Endothelial cell of umbilical vein (primary cell): ENCODE measurements at regions of chr15 and their contacts with region 1.

Region 1: DNA sequence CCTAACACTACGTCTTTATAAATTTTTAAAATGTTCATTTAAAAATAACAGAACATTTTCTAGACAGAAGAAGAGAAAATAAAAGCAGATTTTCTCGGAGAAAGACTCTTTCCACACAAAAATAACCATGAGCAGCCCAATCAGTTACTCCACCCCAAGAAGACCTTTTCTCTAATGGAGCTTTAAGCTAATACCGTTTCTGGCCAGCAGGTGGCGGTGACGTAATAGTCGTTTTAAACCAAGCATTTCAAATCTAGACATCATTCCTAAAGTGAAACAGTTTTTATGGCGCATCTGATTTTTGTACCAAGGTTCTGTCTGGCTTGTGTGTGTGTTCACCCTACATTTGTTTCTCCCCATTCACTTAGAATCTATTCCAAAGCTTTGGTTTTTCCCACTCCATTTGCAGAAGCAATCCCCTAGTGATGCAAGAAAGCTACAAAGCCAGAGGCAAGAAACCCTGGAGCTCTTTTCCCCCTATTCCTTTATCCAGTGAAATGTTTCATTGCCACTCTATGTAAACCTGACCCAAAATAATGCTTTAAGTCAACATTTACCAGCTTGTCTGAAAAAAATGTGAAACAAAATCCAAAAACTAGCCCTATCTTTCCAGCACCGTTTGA is 336.7 kb upstream of the IGF1R start:
- DNase-seq: peak; percentile 71
- H3K4me3 ChIP-seq: no peak overlapping the region
- H3K27ac ChIP-seq: no peak overlapping the region
- H3K4me1 ChIP-seq: no peaks in the 10 kb centered on the region
- H3K27me3 ChIP-seq: no peaks in the 10 kb centered on the region
- CTCF ChIP-seq: peak; percentile 65 to 67
- POLR2A ChIP-seq: no peak

Region 2: GRCh38 chr15:98321896-98322295 is 10.2 kb after region 1 on chr15:
- CTCF ChIA-PET with region 1: interaction called, 18 read pairs
- POLR2A ChIA-PET with region 1: no interaction called
- dilution Hi-C with region 1: no loop called
- intact Hi-C with region 1: no loop called
- DNase-seq: no peak
- H3K4me3 ChIP-seq: no peak overlapping the region
- H3K27ac ChIP-seq: no peak overlapping the region
- H3K4me1 ChIP-seq: no peaks in the 10 kb centered on the region
- H3K27me3 ChIP-seq: no peaks in the 10 kb centered on the region
- CTCF ChIP-seq: no peak
- POLR2A ChIP-seq: no peak

Region 3: GRCh38 chr15:98421419-98422129 is 109.9 kb after region 1 on chr15:
- CTCF ChIA-PET with region 1: interaction called, 77 read pairs
- POLR2A ChIA-PET with region 1: no interaction called
- dilution Hi-C with region 1: no loop called
- intact Hi-C with region 1: loop called (anchors 1 kb)
- DNase-seq: peak; percentile 36
- H3K4me3 ChIP-seq: no peak overlapping the region
- H3K27ac ChIP-seq: no peak overlapping the region
- H3K4me1 ChIP-seq: no peaks in the 10 kb centered on the region
- H3K27me3 ChIP-seq: peaks cover 6 to 18% of the 10 kb centered on the region in 2 experiments
- CTCF ChIP-seq: peak; percentile 97 to 99
- POLR2A ChIP-seq: no peak

Region 4: DNA sequence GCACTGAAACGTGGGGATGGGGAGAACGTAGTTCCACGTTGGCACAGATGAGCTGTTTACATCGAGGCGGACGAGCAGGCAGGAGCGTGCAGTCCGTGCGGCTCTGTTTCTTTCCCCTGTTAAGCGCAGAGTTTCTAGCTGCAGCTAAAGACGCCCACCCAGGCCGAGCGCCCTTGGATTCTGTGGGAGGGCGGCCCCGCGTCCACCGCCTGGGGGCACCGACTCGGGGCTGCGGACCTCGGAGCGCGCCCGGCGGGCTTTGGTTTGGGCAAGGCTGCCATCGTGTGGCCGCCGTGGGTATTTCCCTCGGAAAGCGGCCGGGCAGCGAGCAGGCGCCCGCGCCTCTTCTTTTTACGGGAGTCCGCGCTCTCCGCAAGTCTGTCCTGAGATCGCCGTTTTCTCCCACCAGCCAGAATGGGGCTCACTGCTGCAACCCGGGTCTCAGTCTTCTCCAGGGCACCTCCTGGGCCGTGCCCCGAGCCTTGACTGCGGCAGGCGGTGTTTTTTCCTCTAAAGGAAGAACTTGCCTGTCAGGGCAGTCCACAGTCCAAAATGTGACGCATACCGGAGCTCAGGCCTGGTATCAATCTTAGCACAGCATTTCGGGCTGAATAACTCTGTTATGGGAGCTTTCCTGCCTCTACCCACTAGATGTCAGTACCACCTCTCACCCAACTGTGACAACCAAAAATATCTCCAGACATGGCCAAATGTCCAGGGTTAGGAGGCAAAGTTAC is 116.7 kb after region 1 on chr15:
- CTCF ChIA-PET with region 1: interaction called, 77 read pairs
- POLR2A ChIA-PET with region 1: no interaction called
- dilution Hi-C with region 1: no loop called
- intact Hi-C with region 1: loop called (anchors 1 kb)
- DNase-seq: peak; percentile 60
- H3K4me3 ChIP-seq: no peak overlapping the region
- H3K27ac ChIP-seq: no peak overlapping the region
- H3K4me1 ChIP-seq: no peaks in the 10 kb centered on the region
- H3K27me3 ChIP-seq: no peaks in the 10 kb centered on the region
- CTCF ChIP-seq: peak; percentile 67 to 92
- POLR2A ChIP-seq: no peak

Region 5: DNA sequence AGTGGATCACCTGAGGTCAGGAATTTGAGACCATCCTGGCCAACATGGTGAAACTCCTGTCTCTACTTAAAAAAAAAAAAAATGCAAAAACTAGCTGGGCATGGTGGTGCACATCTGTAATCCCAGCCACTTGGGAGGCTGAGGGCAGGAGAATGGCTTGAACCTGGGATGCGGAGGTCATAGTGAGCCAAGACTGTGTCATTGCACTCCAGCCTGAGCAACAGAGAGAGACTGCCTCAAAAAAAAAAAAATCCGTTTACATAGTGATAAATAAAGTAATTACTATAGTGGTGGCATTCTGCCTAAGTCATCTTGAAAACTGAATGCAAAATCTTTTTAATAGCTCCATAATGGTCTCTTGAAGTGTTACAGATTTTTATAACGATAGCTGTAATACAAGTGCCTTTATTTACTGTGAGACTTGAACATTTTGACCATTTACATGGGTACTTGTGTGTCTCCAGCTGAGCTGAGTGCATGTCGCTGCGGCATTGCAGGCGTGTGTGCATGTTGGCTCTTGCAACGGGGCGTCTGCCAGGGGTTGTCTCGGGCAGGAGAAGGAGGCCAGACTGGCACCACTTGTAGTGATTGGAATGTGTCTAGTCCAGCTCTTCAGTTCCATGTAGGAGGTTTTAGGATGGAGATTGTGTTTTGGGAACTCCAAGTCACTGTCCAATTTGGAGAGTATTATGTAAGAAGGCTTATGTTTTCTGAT is 448.6 kb after region 1 on chr15:
- CTCF ChIA-PET with region 1: no interaction called
- POLR2A ChIA-PET with region 1: no interaction called
- dilution Hi-C with region 1: no loop called
- intact Hi-C with region 1: no loop called
- DNase-seq: no peak
- H3K4me3 ChIP-seq: no peak overlapping the region
- H3K27ac ChIP-seq: no peak overlapping the region
- H3K4me1 ChIP-seq: no peaks in the 10 kb centered on the region
- H3K27me3 ChIP-seq: no peaks in the 10 kb centered on the region
- CTCF ChIP-seq: no peak
- POLR2A ChIP-seq: no peak